H1 (cell line): ENCODE measurements at regions of chr12 and their contacts with region 1.

Region 1: DNA sequence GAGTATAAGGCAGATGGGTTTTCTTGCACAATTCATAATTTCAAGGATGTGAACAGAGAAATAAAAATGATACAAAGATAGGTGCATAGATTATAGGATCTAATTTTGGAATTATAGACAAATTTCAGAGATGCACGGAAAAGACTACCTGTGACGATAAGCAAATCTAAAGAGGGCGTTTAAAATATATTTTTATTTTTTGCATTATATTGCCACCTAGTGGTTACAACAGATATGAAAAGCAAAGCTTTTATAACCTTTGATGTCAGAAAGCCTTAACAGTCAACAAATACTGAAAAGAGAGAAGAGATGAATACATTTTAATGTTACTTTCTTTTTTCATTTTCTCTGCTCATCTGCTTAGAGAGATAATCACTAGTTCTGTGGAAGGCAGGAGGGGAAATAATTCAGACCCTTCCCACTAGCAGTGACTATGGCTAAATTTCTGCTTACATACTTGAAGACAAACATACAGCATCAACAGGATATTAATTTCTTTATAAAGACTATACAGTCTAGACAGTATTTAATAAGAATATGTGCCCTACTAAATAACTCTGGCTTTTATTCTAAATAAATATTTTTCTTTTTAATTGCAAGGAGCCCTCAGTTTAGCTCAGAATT is 46.3 kb downstream of the NTS start:
- DNase-seq: no peak
- H3K4me3 ChIP-seq: no peak overlapping the region
- H3K27ac ChIP-seq: no peak overlapping the region
- H3K4me1 ChIP-seq: peaks cover 0 to 3% (median under 1%) of the 10 kb centered on the region in 4 experiments; a peak in 2 of 7 replicates
- H3K27me3 ChIP-seq: no peaks in the 10 kb centered on the region
- CTCF ChIP-seq: peak in 1 of 3 experiments; percentile 34; a peak in 2 of 4 replicates
- EP300 ChIP-seq: no peak
- POLR2A ChIP-seq: no peak
- RAD21 ChIP-seq: peak; percentile 56 to 70

Region 2: GRCh38 chr12:85424581-85425348 is 495.7 kb before region 1 on chr12:
- CTCF ChIA-PET with region 1: interaction called, 16 read pairs
- POLR2A ChIA-PET with region 1: no interaction called
- DNase-seq: peak in 1 of 2 experiments; percentile 55
- H3K4me3 ChIP-seq: no peak overlapping the region
- H3K27ac ChIP-seq: no peak overlapping the region
- H3K4me1 ChIP-seq: no peaks in the 10 kb centered on the region
- H3K27me3 ChIP-seq: no peaks in the 10 kb centered on the region
- CTCF ChIP-seq: peak in 2 of 3 experiments; percentile 34 to 35; a peak in 2 of 4 replicates
- EP300 ChIP-seq: no peak
- POLR2A ChIP-seq: no peak
- RAD21 ChIP-seq: peak; percentile 61 to 63

Region 3: DNA sequence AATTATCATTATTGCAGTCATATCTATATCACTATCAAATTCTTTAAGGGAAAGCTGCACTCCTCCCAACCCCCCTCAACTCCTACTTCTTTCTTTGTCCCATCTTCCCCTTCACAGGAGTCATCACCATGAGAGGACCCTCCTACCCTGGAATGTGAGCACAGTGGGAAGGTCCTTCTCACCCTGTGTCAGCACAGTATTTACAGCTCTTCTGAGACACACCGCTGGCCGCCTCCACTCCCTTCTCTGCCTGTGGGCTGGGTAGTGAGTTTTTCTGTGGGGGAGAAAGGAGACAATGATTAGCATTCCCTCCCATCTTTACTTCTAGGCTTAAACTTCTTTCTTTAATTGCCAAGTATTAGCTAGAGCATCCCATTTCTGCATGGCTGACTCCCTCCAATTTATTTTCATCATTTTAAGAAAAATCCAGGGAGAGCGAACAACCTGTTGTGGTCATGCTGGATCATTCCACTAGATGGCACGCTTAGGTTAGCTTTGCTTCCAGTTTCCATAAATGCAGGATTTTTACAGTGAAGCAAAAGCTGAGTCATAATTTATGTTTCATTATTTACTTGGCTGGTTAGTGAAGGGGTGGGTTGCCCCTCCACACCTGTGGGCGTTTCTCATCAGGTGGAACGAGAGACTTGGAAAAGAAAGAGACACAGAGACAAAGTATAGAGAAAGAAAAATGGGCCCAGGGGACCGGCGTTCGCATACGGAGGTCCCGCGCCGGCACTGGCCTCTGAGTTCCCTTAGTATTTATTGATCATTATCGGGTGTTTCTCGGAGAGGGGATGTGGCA is 451.9 kb before region 1 on chr12:
- CTCF ChIA-PET with region 1: interaction called, 12 read pairs
- POLR2A ChIA-PET with region 1: no interaction called
- DNase-seq: peak in 1 of 2 experiments; percentile 67
- H3K4me3 ChIP-seq: peak overlapping the region; percentile 20 to 60 (median 32); a peak in 6 of 8 replicates
- H3K27ac ChIP-seq: no peak overlapping the region; the same call in 1 of the 2 replicates
- H3K4me1 ChIP-seq: peaks cover 0 to 3% (median 1%) of the 10 kb centered on the region in 4 experiments; a peak in 3 of 7 replicates
- H3K27me3 ChIP-seq: no peaks in the 10 kb centered on the region
- CTCF ChIP-seq: peak in 2 of 3 experiments; percentile 72 to 75; a peak in 3 of 4 replicates
- EP300 ChIP-seq: no peak
- POLR2A ChIP-seq: no peak
- RAD21 ChIP-seq: peak; percentile 92 to 93

Region 4: DNA sequence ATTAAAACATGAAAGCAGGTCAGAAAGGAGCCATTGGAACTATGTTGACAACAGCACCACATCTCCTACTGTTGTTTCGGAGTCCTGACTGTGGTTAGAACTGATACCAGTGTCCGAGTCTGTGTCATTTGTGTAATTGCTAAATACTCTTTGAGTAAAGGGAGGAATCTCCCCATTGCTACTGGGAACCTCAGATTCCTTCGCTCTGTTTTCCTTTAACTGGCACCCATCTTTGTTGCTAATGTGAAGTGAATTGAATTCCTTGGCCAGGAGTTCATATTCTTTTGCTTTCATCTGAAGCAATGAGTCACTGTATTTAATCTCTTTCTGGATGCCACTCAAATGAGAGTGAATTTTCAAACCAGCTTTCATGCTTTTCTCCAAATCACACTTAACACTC is 115.8 kb before region 1 on chr12:
- CTCF ChIA-PET with region 1: no interaction called
- POLR2A ChIA-PET with region 1: no interaction called
- DNase-seq: no peak
- H3K4me3 ChIP-seq: no peak overlapping the region
- H3K27ac ChIP-seq: no peak overlapping the region
- H3K4me1 ChIP-seq: no peaks in the 10 kb centered on the region
- H3K27me3 ChIP-seq: no peaks in the 10 kb centered on the region
- CTCF ChIP-seq: no peak
- EP300 ChIP-seq: no peak
- POLR2A ChIP-seq: no peak
- RAD21 ChIP-seq: no peak

Region 5: DNA sequence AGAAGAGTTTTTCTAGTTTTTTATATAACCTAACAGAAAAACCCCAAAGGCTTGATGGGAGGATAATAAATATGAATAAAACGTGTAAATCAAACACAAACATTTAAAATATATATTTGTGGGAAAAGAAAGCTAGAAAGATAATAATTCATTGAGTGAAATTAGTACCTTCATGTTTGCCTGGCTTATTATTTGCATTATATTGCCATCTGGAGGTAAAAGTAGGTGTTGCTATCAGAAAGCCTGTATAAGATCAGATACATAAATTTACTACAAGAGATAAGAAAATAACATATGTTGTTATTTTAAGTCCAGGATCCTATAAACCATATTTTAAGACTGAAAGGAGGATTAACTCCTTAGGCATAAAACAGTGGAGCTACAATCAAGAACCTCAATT is 31.4 kb after region 1 on chr12:
- CTCF ChIA-PET with region 1: interaction called, 130 read pairs
- POLR2A ChIA-PET with region 1: interaction called, 6 read pairs
- DNase-seq: no peak
- H3K4me3 ChIP-seq: no peak overlapping the region
- H3K27ac ChIP-seq: no peak overlapping the region
- H3K4me1 ChIP-seq: peaks cover 2 to 23% (median 12%) of the 10 kb centered on the region in 4 experiments; a peak in 5 of 7 replicates
- H3K27me3 ChIP-seq: no peaks in the 10 kb centered on the region
- CTCF ChIP-seq: peak in 2 of 3 experiments; percentile 43 to 54; a peak in 2 of 4 replicates
- EP300 ChIP-seq: no peak
- POLR2A ChIP-seq: no peak
- RAD21 ChIP-seq: peak in 1 of 2 experiments; percentile 77

Region 6: GRCh38 chr12:86006727-86007126 is 86.3 kb after region 1 on chr12:
- CTCF ChIA-PET with region 1: no interaction called
- POLR2A ChIA-PET with region 1: no interaction called
- DNase-seq: no peak
- H3K4me3 ChIP-seq: no peak overlapping the region
- H3K27ac ChIP-seq: no peak overlapping the region
- H3K4me1 ChIP-seq: no peaks in the 10 kb centered on the region
- H3K27me3 ChIP-seq: no peaks in the 10 kb centered on the region
- CTCF ChIP-seq: no peak
- EP300 ChIP-seq: no peak
- POLR2A ChIP-seq: no peak
- RAD21 ChIP-seq: no peak